Activated CD4-positive, alpha-beta memory T cell treated with anti-CD3 and anti-CD28 coated beads for 36 hours (primary cell): ENCODE measurements at regions of chr17 and their contacts with region 1.

Region 1: DNA sequence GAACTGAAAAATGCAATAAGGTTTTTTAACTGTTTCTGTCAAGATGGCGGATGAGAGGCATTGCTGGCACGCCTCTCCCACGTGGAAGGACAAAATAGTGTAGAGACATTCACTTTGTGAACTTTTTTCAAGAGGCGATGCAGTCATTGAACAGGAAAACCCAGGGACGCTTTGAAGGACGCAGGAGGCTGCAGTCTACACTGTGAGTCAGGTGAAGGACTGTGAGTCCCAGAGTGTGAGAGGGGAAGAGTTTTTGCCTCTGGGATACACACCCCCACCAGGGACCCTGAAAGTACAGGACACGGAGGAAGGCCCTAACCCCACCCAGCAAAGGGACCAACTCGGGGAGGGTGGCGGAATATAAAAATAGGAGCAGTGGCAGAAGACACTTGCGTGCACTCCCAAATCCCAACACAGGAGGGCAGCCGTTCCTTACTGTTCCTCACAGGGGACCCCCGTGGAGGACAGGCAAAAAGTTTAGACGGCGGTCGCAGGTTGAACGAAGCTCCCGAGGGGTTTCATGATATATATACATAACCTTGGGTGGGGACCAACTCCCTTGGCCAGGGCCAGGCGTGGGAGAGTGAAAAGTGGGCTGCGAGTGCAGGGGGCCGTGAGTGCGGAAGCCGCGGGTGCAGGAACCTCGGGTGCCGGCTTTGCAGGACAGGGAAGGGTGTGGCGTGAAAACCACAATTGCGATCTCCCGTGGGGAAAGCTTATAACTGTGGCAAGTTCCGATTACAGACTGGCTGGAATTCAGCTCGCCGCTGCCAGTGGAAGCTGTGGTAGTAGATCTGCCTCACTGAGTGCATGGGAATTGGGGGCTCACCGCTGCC is 82.0 kb upstream of the ALOX12 start:
- DNase-seq: peak; percentile 82
- H3K4me3 Mint-ChIP-seq: peak overlapping the region; percentile 53
- H3K27ac Mint-ChIP-seq: no peak overlapping the region
- H3K4me1 Mint-ChIP-seq: peaks cover 16% of the 10 kb centered on the region
- H3K27me3 Mint-ChIP-seq: peaks cover 16% of the 10 kb centered on the region

Region 2: DNA sequence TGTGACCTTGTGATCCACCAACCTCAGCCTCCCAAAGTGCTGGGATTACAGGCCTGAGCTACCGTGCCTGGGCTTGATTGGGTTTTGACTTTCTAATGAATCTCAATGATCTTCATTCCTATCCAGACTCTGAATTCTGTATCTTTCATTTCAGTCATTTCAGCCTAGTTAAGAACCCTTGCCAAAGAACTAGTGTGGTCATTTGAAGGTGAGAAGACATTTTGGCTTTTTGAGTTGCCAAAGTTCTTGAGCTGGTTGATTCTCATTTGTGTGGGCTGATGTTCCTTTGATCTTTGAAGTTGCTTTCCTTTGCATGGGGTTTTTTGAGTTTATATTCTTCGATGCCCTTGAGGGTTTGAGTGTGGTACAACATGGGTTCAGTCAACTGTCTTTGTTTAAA is 51.7 kb before region 1 on chr17:
- CTCF ChIA-PET with region 1: no interaction called
- POLR2A ChIA-PET with region 1: no interaction called
- intact Hi-C with region 1: no loop called
- DNase-seq: no peak
- H3K4me3 Mint-ChIP-seq: no peak overlapping the region
- H3K27ac Mint-ChIP-seq: no peak overlapping the region
- H3K4me1 Mint-ChIP-seq: peaks cover 3% of the 10 kb centered on the region
- H3K27me3 Mint-ChIP-seq: peaks cover 20% of the 10 kb centered on the region

Region 3: GRCh38 chr17:6903326-6903900 is 10.4 kb before region 1 on chr17:
- CTCF ChIA-PET with region 1: interaction called, 17 read pairs
- POLR2A ChIA-PET with region 1: no interaction called
- intact Hi-C with region 1: no loop called
- DNase-seq: no peak
- H3K4me3 Mint-ChIP-seq: no peak overlapping the region
- H3K27ac Mint-ChIP-seq: no peak overlapping the region
- H3K4me1 Mint-ChIP-seq: no peaks in the 10 kb centered on the region
- H3K27me3 Mint-ChIP-seq: peaks cover 5% of the 10 kb centered on the region

Region 4: GRCh38 chr17:7004398-7005253 is 90.8 kb after region 1 on chr17:
- CTCF ChIA-PET with region 1: interaction called, 257 read pairs
- POLR2A ChIA-PET with region 1: interaction called, 3 read pairs
- intact Hi-C with region 1: loop called (anchors 1 kb)
- DNase-seq: no peak
- H3K4me3 Mint-ChIP-seq: no peak overlapping the region
- H3K27ac Mint-ChIP-seq: peak overlapping the region; percentile 49
- H3K4me1 Mint-ChIP-seq: peaks cover 22% of the 10 kb centered on the region
- H3K27me3 Mint-ChIP-seq: no peaks in the 10 kb centered on the region

Region 5: DNA sequence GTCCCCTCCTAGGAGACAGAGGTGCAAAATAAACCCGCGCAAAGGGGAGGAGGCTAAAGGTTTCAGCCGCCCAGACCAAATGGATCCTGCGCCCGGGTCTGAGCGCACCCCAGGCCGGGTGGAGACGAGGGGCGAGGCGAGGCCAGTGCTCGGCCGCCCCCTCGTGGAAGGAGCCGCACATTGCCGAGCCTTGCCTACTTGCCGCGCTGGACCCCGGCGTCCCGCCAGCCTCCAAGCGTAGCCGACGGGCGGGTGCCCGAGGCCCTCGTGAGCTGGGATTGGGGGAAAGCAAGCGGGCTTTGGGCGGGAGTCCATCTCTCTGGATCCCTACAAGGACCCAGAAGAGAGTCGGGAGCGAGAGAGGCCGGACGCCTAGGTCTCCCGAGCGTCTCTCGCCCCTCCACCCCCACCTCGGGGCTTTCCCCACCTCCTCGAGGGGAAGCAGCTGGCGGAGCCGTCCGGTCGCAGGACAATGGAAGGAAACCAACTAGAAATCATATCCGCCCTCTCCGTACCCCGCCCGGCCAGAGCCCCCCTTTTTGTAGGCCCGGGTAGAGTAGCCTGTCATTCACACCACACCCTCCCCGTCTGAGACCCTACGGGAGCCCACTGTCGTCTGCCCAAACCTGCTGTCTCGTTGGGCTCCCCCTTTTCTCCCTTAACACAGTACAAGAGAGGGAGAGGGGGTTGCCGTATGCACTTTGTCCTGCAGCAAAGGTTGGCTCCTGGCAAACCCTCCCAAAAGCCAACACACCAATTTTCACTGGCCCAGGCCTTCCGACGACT is 108.4 kb after region 1 on chr17:
- CTCF ChIA-PET with region 1: interaction called, 51 read pairs
- POLR2A ChIA-PET with region 1: no interaction called
- intact Hi-C with region 1: no loop called
- DNase-seq: peak; percentile 87
- H3K4me3 Mint-ChIP-seq: peak overlapping the region; percentile 61
- H3K27ac Mint-ChIP-seq: peak overlapping the region; percentile 45
- H3K4me1 Mint-ChIP-seq: peaks cover 38% of the 10 kb centered on the region
- H3K27me3 Mint-ChIP-seq: peaks cover 2% of the 10 kb centered on the region